Activated T-helper 2 cell treated with anti-CD3 and anti-CD28 coated beads, Interferon-gamma antibody, Interleukin-2, Interleukin-4, amounts not matched to agents 10 μg/mL and 5 μg/mL and 100 μg/mL, durations not matched to agents 14 hours and 24 hours and 36 hours (primary cell): ENCODE measurements at regions of chr4 and their contacts with region 1.

Region 1: DNA sequence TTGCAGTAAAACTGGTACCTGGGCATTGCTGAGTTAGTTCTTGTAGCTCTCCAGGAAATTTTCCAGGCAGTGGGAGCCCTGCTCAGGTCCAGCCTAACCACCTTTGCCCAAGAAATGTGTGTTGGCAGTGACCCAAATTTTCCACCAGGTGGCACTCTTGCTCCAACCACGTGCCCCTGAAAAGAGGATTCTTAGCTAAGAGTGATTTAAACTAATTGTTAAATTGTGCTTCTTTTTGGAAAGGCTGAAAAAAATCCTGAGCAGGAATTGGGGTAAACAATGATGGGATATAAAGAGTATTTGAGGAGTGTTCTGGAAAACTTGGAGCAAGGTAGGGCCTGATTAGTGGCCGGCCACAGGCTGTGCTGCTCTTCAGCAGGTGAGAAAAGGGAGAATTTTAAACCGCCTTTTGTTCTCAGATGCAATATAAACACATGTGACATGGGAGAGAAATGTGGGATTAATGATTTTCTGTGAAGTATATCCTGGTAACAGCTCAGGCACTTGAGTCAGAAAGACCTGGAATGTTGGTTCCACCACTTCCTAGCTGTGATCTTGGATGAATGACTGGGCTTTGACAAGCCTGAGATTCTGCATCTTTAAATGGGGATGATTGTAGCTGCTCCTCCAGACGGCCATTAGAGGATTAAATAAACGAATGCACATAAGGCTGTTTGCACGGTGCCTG is 219.6 kb downstream of the PTTG2 start:
- DNase-seq: peak; percentile 59
- H3K4me3 Mint-ChIP-seq: no peak overlapping the region
- H3K27ac Mint-ChIP-seq: no peak overlapping the region
- H3K4me1 Mint-ChIP-seq: peaks cover 23% of the 10 kb centered on the region
- H3K27me3 Mint-ChIP-seq: peaks cover 25% of the 10 kb centered on the region

Region 2: GRCh38 chr4:37928426-37929416 is 251.1 kb before region 1 on chr4:
- intact Hi-C with region 1: no loop called
- DNase-seq: no peak
- H3K4me3 Mint-ChIP-seq: no peak overlapping the region
- H3K27ac Mint-ChIP-seq: peak overlapping the region; percentile 7
- H3K4me1 Mint-ChIP-seq: peaks cover 32% of the 10 kb centered on the region
- H3K27me3 Mint-ChIP-seq: no peaks in the 10 kb centered on the region

Region 3: DNA sequence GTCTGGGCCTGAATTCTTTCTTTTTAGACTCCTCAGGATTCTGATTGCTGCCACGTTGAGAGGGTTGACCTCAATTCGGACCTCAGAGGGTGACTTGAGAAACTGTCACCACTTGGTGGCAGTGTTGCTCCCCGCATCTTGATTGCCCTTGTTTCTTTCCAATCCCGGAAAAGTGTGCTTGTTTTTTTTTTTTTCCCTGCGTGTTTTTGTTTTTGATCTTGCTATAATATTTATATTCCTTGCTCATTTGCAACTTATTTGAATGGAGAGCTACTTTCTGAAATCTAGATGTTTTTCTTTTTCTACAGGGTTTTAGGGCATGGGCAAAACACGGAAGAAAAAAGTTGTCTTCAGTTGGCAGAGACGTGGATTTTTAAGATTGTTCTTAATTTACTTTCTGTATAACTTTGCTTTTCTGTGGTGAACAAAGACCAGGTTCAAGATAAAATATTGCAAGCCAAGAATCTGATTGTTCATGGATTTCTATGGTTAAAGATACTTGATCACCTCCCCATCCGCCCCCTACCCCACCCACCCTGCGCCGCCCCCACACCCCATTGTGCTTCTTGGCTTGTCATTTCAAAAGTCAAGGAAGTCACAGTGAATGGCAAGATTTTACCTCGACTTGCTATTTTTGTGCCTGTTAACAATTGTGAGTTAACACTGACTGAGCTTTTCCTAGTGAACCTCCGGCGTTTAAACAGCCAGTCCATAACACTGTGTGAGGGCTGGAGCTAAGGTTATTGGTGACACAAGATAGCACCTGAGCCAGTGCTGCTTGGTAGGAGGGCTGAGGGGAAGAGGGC is 117.5 kb before region 1 on chr4:
- intact Hi-C with region 1: loop called (anchors 2 kb)
- DNase-seq: peak; percentile 36
- H3K4me3 Mint-ChIP-seq: peak overlapping the region; percentile 67
- H3K27ac Mint-ChIP-seq: peak overlapping the region; percentile 61
- H3K4me1 Mint-ChIP-seq: peaks cover 16% of the 10 kb centered on the region
- H3K27me3 Mint-ChIP-seq: no peaks in the 10 kb centered on the region

Region 4: GRCh38 chr4:38334810-38335537 is 155.1 kb after region 1 on chr4:
- intact Hi-C with region 1: no loop called
- DNase-seq: no peak
- H3K4me3 Mint-ChIP-seq: no peak overlapping the region
- H3K27ac Mint-ChIP-seq: no peak overlapping the region
- H3K4me1 Mint-ChIP-seq: peaks cover 14% of the 10 kb centered on the region
- H3K27me3 Mint-ChIP-seq: peaks cover 42% of the 10 kb centered on the region

Region 5: DNA sequence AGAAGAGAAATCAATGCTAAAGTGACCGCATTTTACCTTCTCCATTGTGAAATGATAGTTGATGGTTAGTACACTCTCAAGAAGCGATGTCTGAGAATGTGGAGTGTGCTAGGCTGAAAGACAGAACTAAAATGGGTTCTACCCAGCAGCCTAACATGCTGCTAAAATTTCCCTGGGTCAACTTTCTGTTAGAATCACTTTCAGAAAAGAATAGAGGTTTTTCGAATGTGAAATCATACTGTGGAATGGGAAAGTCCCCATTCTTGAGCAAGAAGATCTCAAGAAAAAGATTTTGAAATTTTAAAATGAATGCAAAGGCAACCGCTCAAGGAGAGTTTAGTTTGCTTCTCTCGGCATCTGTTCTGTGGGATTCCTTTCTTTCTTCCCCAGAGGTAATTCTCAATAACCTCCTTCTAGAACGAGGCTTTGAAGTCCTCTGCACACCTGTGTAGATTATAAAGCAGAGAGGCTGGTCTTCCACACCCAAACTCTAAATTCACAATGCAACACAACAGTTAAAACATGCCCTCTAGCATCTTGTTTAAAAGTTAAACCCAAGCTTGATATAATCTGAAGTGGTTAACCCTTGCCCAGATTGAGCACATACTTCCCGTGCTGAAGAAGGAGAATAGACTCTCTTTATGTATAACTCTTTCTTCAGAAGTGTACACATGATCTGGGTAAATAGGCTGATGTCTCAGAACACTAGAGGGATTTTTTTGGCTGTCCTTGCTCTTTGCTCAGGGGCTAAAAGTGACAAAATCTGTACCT is 275.4 kb after region 1 on chr4:
- intact Hi-C with region 1: loop called (anchors 10 kb)
- DNase-seq: no peak
- H3K4me3 Mint-ChIP-seq: no peak overlapping the region
- H3K27ac Mint-ChIP-seq: peak overlapping the region; percentile 74
- H3K4me1 Mint-ChIP-seq: peaks cover 45% of the 10 kb centered on the region
- H3K27me3 Mint-ChIP-seq: peaks cover 12% of the 10 kb centered on the region

Region 6: GRCh38 chr4:38675146-38676121 is 495.6 kb after region 1 on chr4:
- intact Hi-C with region 1: loop called (anchors 1 kb)
- DNase-seq: peak; percentile 68
- H3K4me3 Mint-ChIP-seq: no peak overlapping the region
- H3K27ac Mint-ChIP-seq: no peak overlapping the region
- H3K4me1 Mint-ChIP-seq: peaks cover 18% of the 10 kb centered on the region
- H3K27me3 Mint-ChIP-seq: peaks cover 30% of the 10 kb centered on the region

Region 7: DNA sequence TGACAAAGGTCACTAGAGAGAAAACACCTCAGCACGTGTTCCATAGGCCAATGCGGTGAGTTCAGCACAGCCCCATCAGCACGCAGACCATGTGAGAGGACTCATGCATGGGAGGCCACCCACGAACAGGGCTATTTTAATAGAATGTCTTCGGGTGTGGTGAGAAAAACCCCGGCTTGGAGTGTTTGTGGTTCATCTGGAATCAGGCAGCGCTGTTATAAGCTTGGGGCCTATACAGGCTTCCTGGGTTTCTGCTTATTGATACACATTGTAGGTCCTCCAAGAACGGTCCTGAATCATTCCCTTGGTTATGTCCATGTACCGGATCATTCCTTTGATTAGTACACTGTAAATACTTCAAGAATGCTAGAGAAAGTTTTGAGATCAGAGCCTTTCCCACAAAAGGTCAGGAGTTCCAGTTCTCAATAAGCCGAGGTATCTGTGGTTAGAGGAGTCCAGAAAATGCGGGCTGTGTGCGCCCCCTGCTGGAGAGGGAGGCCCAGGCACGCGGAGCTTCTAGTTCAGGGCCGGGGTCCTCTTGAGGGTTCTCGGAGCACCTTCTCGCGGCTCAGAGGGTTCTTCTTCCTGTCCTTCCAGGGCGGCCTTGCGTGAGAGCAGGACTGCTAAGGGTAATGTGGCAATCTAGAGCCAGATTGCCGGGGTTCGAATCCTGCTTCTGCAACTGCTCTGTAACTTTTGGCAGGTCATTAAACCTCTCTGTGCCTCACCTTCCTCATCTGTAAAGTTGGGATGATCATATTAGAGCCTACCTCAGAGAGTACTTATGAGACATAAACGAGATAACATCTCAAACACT is 551.2 kb after region 1 on chr4:
- intact Hi-C with region 1: loop called (anchors 1 kb)
- DNase-seq: peak; percentile 64
- H3K4me3 Mint-ChIP-seq: no peak overlapping the region
- H3K27ac Mint-ChIP-seq: no peak overlapping the region
- H3K4me1 Mint-ChIP-seq: peaks cover 10% of the 10 kb centered on the region
- H3K27me3 Mint-ChIP-seq: peaks cover 21% of the 10 kb centered on the region

Region 8: DNA sequence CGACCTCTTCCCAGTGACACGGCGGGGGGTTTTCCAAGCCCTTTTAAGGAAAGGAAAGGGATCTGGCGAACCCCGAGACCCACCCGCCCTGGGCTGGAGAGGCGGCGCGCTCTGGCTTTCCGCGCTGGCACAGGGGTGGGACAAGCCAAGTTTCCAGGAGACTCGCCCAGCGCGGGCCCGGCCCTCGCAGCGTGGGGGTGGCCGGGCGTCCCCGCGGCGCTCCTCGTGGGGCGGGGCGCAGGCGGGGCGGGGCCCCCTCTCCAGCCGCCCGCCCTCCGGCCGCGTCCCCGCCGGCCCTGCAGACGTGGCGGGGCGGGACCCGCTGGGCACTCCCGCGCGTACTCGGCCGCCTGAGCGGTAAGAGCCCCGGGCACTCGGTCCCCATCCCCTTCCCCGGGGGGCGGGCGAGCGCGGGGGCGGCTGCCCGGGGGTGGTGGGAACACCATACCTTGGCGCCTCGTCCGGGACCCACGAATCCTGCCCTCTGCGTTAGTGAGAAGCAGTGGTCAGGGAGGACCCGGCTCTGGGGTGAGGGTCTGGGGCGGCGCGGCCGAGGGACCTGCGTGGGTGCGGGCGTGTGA is 687.7 kb after region 1 on chr4 and contains the start of gene FAM114A1:
- intact Hi-C with region 1: loop called (anchors 10 kb)
- DNase-seq: no peak
- H3K4me3 Mint-ChIP-seq: peak within 1 kb of the TSS; percentile 75
- H3K27ac Mint-ChIP-seq: no peak within 1 kb of the TSS
- H3K4me1 Mint-ChIP-seq: peaks cover 9% of the 10 kb centered on the region
- H3K27me3 Mint-ChIP-seq: peaks cover 30% of the 10 kb centered on the region
- total RNA-seq, gene FAM114A1: 0.14 and 0.67 TPM in 2 replicates

Region 9: GRCh38 chr4:38980903-38981676 is 801.3 kb after region 1 on chr4:
- intact Hi-C with region 1: no loop called
- DNase-seq: no peak
- H3K4me3 Mint-ChIP-seq: peak overlapping the region; percentile 31
- H3K27ac Mint-ChIP-seq: peak overlapping the region; percentile 81
- H3K4me1 Mint-ChIP-seq: peaks cover 53% of the 10 kb centered on the region
- H3K27me3 Mint-ChIP-seq: no peaks in the 10 kb centered on the region